GM18951 (cell line): ENCODE measurements at regions of chr15 and their contacts with region 1.

Region 1: GRCh38 chr15:78761891-78762385 is 49.3 kb downstream of the ADAMTS7 start:
- POLR2A ChIP-seq: no peak

Region 2: DNA sequence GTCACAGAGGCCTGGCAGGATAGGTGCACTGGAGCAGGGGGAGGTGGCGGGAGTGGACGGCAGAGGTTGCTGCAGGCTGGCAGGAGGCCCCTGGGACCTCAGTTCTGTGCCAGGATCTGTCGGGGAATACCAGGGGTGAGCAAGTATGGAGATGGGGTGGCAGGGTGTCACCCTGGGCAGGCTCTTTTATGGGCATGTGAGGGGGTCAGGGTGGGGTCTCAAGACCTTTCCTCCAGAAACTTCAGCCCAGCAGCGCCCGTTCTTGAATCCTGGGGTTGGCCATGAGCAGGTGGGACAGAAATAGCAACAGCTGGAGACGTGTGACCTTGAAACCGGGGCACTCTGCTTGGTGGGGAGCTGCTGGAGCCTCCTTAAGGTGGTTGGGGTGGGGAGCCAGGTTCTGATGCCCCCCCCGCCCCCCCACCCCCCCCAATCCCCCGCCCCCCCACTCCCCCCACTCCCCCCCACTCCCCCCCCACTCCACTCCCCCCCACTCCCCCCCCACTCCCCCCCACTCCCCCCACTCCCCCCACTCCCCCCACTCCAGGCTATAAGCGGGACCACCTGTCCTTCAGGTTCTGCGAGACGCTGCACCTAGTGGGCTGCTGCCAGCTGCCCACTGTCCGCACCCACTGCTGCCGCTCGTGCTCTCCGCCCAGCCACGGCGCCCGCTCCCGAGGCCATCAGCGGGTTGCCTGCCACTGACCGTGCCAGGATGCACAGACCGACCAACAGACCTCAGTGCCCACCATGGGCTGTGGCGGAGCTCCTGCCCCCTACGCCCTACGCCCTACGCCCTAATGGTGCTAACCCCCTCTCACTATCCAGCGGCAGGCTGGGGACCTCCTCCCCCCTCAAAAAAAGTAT is 769.3 kb before region 1 on chr15:
- in situ Hi-C with region 1: loop called (anchors 5 kb)
- POLR2A ChIP-seq: no peak

Region 3: DNA sequence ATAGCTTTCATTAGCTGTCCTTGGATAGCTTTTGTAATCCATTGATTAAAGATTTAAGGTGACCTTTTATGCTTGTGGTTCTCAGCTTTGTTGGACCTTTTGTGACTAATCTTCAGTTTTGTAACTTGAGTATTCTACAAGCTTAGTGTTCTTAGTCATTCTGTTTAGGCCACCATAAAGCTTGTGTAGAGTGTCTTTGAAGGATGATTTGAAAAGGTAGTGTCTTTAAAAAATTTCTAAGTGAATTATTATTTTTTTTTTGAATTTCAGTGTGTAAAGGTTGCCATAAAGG is 118.2 kb after region 1 on chr15:
- in situ Hi-C with region 1: no loop called
- POLR2A ChIP-seq: no peak

Region 4: DNA sequence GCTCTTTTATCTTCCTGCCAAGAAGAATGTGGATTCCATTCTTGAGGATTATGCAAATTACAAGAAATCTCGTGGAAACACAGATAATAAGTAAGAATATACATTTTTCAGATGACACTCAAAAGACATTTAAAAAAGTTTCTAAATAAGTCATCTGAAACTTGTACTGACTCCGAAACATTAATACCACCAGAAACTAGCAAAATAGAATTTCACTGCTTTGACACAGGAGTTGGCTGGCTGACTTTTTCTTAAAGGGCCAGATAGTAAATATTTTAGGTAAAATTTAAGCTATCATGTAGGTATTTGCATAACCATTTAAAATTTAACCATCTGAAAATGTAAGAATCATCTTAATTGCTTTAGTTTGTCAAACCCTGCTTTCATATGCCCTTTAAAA is 131.6 kb after region 1 on chr15:
- in situ Hi-C with region 1: no loop called
- POLR2A ChIP-seq: no peak